Kidney (tissue), 22 donors: ENCODE measurements at regions of chr19 and their contacts with region 1.

Region 1: GRCh38 chr19:42440357-42441048 is 2.2 kb downstream of the CXCL17 start:
- DNase-seq: peak; percentile 58 to 85 (median 59)
- H3K4me3 ChIP-seq: no peak overlapping the region
- H3K27ac ChIP-seq: no peak overlapping the region
- H3K4me1 ChIP-seq: no peaks in the 10 kb centered on the region
- H3K27me3 ChIP-seq: no peaks in the 10 kb centered on the region
- CTCF ChIP-seq: peak; percentile 68

Region 2: GRCh38 chr19:42352301-42353259 is 87.9 kb before region 1 on chr19:
- intact Hi-C with region 1: no loop called
- DNase-seq: peak in 4 of 5 donors; percentile 59 to 79 (median 68)
- H3K4me3 ChIP-seq: no peak overlapping the region
- H3K27ac ChIP-seq: no peak overlapping the region
- H3K4me1 ChIP-seq: no peaks in the 10 kb centered on the region
- H3K27me3 ChIP-seq: no peaks in the 10 kb centered on the region
- CTCF ChIP-seq: no peak

Region 3: GRCh38 chr19:42531313-42531712 is 90.8 kb after region 1 on chr19:
- intact Hi-C with region 1: loop called (anchors 10 kb)
- DNase-seq: no peak
- H3K4me3 ChIP-seq: no peak overlapping the region
- H3K27ac ChIP-seq: no peak overlapping the region
- H3K4me1 ChIP-seq: peaks cover 0 to 13% (median 11%) of the 10 kb centered on the region in 3 donors
- H3K27me3 ChIP-seq: no peaks in the 10 kb centered on the region
- CTCF ChIP-seq: no peak